ENCODE measurements at regions of chr1 and their contacts with region 1.

Region 1: GRCh38 chr1:220891224-220892085 is 12.2 kb downstream of the HLX start:
- DNase-seq: peak in 2 of 3 donors; percentile 26 to 50
- H3K4me3 ChIP-seq: peak overlapping the region in 1 of 3 experiments; percentile 40
- H3K4me3 Mint-ChIP-seq: peak overlapping the region; percentile 72 to 97
- H3K27ac ChIP-seq: no peak overlapping the region
- H3K27ac Mint-ChIP-seq: peak overlapping the region in 2 of 7 donors; percentile 30 to 74
- H3K4me1 ChIP-seq: peaks cover 49 to 50% of the 10 kb centered on the region in 2 donors
- H3K4me1 Mint-ChIP-seq: peaks cover 62% of the 10 kb centered on the region
- H3K27me3 ChIP-seq: peaks cover 65 to 95% of the 10 kb centered on the region in 2 donors
- H3K27me3 Mint-ChIP-seq: peaks cover 88 to 99% (median 96%) of the 10 kb centered on the region in 3 donors
- CTCF ChIP-seq: no peak

Region 2: DNA sequence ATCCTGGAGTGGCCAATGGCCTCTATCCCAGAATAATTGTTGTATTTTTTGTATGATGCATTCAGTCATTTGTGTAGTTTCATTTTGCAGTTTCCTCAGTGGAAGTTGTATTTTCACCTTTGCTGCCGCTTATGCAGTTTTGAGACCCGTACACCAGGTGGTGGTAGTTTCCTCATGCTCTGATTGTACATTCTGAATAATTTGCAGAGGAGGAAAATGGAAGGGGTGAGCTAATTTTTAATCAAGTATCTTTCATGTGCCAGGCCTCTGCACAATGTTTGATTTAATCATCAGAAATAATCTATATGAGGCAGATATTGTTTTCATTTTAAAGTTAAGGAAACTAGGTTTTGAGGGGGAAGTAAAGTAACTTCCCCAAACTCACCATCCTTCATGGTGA is 17.3 kb after region 1 on chr1:
- intact Hi-C with region 1: loop called in 1 of 2 experiments (anchors 2 kb)
- DNase-seq: no peak
- H3K4me3 ChIP-seq: no peak overlapping the region
- H3K4me3 Mint-ChIP-seq: peak overlapping the region in 1 of 2 donors; percentile 19
- H3K27ac ChIP-seq: no peak overlapping the region
- H3K27ac Mint-ChIP-seq: peak overlapping the region in 3 of 7 donors; percentile 16 to 58 (median 23)
- H3K4me1 ChIP-seq: peaks cover 4 to 11% of the 10 kb centered on the region in 2 donors
- H3K4me1 Mint-ChIP-seq: peaks cover 19% of the 10 kb centered on the region
- H3K27me3 ChIP-seq: peaks cover 0 to 5% of the 10 kb centered on the region in 2 donors
- H3K27me3 Mint-ChIP-seq: peaks cover 1 to 7% (median 4%) of the 10 kb centered on the region in 3 donors
- CTCF ChIP-seq: peak; percentile 32

Measured in CD14-positive monocyte (primary cell).